ENCODE measurements at regions of chr5 and their contacts with region 1.

Region 1: DNA sequence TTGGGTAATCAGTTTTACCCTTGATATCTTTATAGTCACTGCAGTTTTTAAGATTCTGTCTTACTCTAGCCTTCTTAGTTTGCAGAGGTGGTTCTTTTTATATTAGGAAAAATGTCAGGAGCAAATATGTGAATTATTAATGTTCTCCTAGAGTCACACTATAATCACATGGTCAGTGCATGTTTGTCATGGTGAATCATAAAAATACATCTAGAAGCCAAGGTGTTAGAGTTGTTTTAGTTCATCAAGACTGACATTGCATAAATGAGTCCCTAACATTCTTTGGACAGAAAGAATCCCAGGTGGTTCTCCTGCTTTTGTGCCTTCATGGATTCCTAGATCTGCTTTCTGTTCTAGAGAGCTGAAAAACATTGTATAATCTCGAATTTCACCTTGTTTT is 22.9 kb downstream of the ATG10 start:
- DNase-seq: no peak
- H3K4me3 ChIP-seq: no peak overlapping the region
- CTCF ChIP-seq: no peak

Region 2: GRCh38 chr5:81936066-81936465 is 58.6 kb before region 1 on chr5:
- in situ Hi-C with region 1: loop called (anchors 5 kb)
- DNase-seq: no peak
- H3K4me3 ChIP-seq: no peak overlapping the region
- CTCF ChIP-seq: no peak

Region 3: DNA sequence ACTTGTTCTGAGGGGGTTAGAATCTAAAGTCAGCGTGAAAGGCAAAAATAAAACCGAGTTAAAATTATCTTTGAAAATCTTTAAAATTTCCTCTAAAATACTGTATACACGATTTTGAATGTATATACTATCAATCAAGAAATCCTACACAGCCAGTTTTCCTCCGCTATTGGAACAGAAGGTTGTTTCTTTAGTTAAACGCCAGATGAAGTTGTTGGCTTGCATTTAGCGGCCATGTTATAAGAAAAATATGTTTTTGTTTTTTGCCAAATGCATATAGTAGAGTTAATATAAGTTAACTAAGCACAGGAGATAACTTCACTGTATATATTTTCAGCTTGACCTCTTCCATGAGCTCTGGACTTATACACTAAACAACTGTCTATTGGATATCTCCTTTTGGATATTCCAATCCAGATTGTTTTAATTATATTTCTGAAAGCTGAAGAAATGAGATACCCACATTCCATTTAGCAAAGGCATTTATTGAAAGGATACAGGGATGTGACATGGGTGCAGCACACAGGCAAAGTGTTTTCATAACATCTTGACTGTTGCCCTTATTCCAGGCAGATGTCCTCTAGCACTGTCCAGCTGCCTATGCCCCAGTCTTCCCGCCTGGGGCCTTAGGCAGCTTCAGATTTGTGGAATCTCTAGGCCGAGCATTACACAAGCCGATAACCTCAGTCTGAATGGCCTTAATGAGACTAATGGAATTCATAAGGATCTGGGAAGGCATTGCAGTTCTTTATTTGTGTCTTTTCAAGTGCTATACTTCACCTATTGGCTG is 32.8 kb before region 1 on chr5:
- in situ Hi-C with region 1: no loop called
- DNase-seq: no peak
- H3K4me3 ChIP-seq: no peak overlapping the region
- CTCF ChIP-seq: no peak

Region 4: GRCh38 chr5:82068723-82069122 is 74.0 kb after region 1 on chr5:
- in situ Hi-C with region 1: loop called (anchors 5 kb)
- DNase-seq: no peak
- H3K4me3 ChIP-seq: no peak overlapping the region
- CTCF ChIP-seq: no peak

Measured in astrocyte of the cerebellum (primary cell).